ENCODE measurements at regions of chr2 and their contacts with region 1.

Region 1: DNA sequence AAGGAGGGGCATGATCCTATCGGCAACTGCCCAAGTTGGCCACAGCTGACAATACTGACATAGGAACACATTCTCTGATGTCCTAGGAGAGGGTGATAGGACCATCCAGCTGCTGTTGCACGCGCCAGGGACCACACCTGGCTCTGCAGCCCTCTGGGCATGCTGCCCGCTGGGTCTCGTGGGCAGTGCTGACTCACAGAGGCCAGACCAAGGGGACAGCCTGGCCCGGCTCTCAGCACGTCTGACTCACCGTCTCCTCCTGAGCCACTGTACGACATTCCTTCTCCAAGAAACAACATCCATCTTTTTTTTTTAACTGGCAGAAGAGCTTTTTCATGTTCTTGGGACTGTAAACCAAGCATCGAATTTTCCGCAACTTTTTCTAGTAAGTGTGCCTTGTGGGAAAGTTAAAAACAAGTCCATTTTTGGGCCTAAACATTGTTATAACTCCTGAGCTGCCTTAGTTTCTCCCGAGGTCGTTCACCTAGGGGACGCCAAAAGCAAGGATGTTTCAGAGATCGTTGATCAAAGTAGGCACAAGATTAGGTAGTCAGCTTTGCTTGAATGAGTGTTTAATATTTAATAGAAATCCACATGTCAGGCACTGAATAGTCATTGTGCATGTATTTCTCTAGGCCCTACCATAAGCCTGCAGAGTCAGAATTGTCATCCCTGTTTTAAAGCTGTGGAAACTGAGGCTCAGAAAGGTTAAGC is 100.3 kb downstream of the TTC32 start:
- DNase-seq: peak; percentile 97
- H3K4me3 ChIP-seq: no peak overlapping the region
- H3K27ac ChIP-seq: peak overlapping the region; percentile 47
- H3K4me1 ChIP-seq: peaks cover 13% of the 10 kb centered on the region
- H3K27me3 ChIP-seq: peaks cover 0 to 2% of the 10 kb centered on the region in 2 experiments
- CTCF ChIP-seq: no peak
- POLR2A ChIP-seq: no peak

Region 2: GRCh38 chr2:19711470-19712372 is 89.8 kb before region 1 on chr2:
- CTCF ChIA-PET with region 1: no interaction called
- POLR2A ChIA-PET with region 1: no interaction called
- dilution Hi-C with region 1: no loop called
- intact Hi-C with region 1: loop called (anchors 1 kb)
- DNase-seq: peak; percentile 96
- H3K4me3 ChIP-seq: no peak overlapping the region
- H3K27ac ChIP-seq: peak overlapping the region; percentile 72
- H3K4me1 ChIP-seq: peaks cover 35% of the 10 kb centered on the region
- H3K27me3 ChIP-seq: no peaks in the 10 kb centered on the region
- CTCF ChIP-seq: no peak
- POLR2A ChIP-seq: no peak

Region 3: DNA sequence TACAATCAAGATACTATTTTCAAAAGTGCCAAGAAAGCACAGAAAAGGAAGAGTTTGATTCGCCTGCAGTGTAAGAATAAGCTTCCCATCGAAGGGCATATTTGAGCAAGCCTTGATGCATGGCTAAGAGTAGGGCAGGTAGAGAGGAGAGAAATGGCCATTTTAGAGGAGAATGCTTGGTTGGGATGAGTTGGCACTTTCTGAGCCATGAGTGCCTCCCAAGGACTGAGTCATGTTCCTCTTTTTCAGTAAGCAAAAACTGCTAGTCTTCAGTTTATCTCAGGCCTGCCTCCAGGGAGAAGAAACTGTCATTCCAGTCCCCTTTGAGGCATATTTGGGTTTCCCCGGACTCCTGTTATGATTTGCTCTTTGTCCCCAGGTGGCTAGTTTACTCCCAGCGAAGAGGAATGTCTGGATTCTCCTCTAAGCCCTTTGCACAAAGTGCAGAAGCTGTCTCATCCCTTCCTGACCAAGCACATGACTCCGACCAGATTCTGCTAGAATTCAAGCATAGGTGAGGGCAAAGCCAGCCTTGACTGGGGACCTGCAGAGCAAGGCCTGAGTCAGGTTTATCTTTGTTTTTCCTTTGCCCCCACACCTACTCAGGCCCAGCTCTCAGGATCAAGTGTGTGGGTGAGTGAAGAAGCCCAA is 15.0 kb before region 1 on chr2:
- CTCF ChIA-PET with region 1: interaction called, 6 read pairs
- POLR2A ChIA-PET with region 1: no interaction called
- dilution Hi-C with region 1: no loop called
- intact Hi-C with region 1: loop called (anchors 1 kb)
- DNase-seq: no peak
- H3K4me3 ChIP-seq: no peak overlapping the region
- H3K27ac ChIP-seq: no peak overlapping the region
- H3K4me1 ChIP-seq: no peaks in the 10 kb centered on the region
- H3K27me3 ChIP-seq: peaks cover 0 to 2% of the 10 kb centered on the region in 2 experiments
- CTCF ChIP-seq: no peak
- POLR2A ChIP-seq: no peak

Region 4: GRCh38 chr2:19851116-19851695 is 49.7 kb after region 1 on chr2:
- CTCF ChIA-PET with region 1: no interaction called
- POLR2A ChIA-PET with region 1: no interaction called
- dilution Hi-C with region 1: no loop called
- intact Hi-C with region 1: no loop called
- DNase-seq: no peak
- H3K4me3 ChIP-seq: no peak overlapping the region
- H3K27ac ChIP-seq: no peak overlapping the region
- H3K4me1 ChIP-seq: no peaks in the 10 kb centered on the region
- H3K27me3 ChIP-seq: peaks cover 0 to 2% of the 10 kb centered on the region in 2 experiments
- CTCF ChIP-seq: peak in 1 of 2 donors; percentile 12
- POLR2A ChIP-seq: no peak

Measured in endothelial cell of umbilical vein (primary cell).